HEK293 (cell line): ENCODE measurements at regions of chr22 and their contacts with region 1.

Region 1: DNA sequence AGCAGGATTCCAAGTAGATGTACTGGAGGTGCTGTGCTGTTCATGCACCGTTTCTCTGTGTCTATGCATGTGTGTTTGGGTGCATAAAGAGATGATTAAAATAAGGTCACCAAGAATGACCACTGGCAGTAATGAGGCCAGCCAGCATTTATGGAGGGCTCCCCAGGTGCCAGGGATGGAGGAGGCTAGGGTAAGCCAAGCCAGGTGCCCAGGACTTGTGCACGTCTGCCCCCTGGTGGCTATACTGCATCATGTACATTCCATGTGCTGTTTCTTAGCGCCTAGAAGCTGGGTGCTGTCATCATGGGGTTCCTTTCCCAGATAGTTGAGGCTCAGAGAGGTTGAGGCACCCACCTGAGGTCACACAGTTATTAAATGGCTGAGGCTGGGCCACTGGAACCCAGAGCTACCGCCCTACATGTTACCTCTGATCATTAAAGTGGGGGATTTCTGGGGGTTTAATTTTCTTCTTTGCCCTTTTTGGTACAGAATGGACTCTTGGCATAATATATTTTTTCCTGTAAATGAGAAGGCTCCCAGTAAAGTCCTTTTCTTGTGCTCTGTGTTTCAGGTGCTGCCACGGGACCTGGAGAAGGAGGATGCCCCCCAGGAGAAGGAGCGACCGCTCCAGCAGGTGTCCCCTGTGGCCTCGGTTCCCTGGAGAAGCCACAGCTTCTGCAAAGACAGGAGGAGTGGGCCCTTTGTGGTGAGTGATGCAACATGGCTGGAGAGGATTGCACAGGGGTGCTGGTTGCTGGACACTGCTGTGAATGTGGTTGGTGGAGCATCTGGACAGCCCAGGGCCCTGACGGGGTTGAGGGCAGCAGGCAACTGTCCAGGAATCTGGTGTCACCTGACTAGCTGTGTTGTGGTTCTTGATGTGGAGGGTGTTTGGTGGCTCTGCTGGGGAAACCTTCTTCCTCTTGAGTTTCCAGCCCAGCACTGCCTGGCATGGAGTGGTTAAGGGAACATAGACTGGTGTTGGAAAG is 96.4 kb downstream of the KIAA1671 start:
- H3K4me3 ChIP-seq: no peak overlapping the region
- H3K27ac ChIP-seq: no peak overlapping the region
- H3K4me1 ChIP-seq: no peaks in the 10 kb centered on the region; the same call in 1 of the 2 replicates
- CTCF ChIP-seq: peak; percentile 68

Region 2: GRCh38 chr22:24867323-24868022 is 181.5 kb before region 1 on chr22:
- CTCF ChIA-PET with region 1: no interaction called
- POLR2A ChIA-PET with region 1: no interaction called
- H3K4me3 ChIP-seq: no peak overlapping the region
- H3K27ac ChIP-seq: no peak overlapping the region
- H3K4me1 ChIP-seq: no peaks in the 10 kb centered on the region
- CTCF ChIP-seq: no peak

Region 3: DNA sequence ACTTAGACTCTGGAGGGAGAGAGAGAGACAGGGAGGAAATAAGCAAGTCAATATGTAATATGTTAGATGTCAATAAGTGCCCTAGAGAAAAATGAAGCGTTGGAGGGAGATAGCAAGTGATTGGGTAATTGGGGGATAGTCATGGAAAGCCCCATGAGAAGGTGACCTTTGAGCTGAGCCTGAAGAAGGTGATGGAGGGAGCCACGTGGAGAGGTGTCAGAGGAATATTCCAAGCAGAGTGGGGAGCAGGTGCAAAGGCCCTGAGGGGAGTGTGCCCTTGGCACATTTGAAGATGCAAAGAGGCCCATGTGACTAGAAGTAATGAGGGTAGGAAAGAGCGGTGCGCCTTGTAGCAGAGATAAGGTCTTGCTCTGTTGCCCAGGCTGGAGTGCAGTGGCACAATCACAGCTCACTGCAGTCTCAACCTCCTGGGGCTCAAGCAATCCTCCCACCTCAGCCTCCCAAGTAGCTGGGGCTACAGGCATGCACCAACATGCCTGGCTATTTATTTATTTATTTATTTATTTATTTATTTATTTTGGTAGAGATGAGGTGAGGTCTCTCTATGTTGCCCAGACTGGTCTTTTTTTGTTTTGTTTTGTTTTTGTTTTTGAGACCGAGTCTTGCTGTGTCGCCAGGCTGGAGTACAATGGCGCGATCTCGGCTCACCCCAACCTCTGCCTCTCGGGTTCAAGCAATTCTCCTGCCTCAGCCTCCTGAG is 104.6 kb before region 1 on chr22:
- CTCF ChIA-PET with region 1: interaction called, 300 read pairs
- POLR2A ChIA-PET with region 1: interaction called, 3 read pairs
- H3K4me3 ChIP-seq: no peak overlapping the region
- H3K27ac ChIP-seq: no peak overlapping the region
- H3K4me1 ChIP-seq: no peaks in the 10 kb centered on the region
- CTCF ChIP-seq: no peak

Region 4: GRCh38 chr22:24951942-24952836 is 96.8 kb before region 1 on chr22 and contains the start of gene KIAA1671:
- CTCF ChIA-PET with region 1: interaction called, 66 read pairs
- POLR2A ChIA-PET with region 1: no interaction called
- H3K4me3 ChIP-seq: peak within 1 kb of the TSS; percentile 79
- H3K27ac ChIP-seq: peak within 1 kb of the TSS; percentile 82
- H3K4me1 ChIP-seq: peaks cover 10% of the 10 kb centered on the region; the same call in 1 of the 2 replicates
- CTCF ChIP-seq: peak; percentile 88

Region 5: DNA sequence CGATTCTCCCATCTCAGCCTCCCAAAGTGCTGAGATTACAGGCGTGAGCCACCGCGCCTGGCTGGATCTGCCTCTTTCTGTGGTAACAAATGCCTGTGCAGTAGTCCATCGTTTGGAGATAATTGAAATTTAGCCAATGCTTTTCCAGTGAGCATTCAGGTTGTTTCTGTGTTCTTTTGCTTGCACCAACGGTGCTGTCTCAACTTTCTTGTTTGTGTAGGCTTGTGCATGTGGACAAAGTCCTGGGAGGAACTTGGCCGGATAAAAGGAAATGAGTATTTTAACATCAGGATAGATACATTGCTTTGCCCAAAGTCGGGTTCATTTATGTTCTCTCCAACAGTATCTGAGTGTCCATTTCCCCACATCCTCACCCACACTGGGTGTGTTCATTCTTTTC is 10.7 kb before region 1 on chr22:
- CTCF ChIA-PET with region 1: interaction called, 22 read pairs
- POLR2A ChIA-PET with region 1: no interaction called
- H3K4me3 ChIP-seq: no peak overlapping the region
- H3K27ac ChIP-seq: no peak overlapping the region
- H3K4me1 ChIP-seq: no peaks in the 10 kb centered on the region
- CTCF ChIP-seq: no peak